GM10248 (cell line): ENCODE measurements at regions of chr4 and their contacts with region 1.

Region 1: GRCh38 chr4:94610145-94610544 is 147.6 kb upstream of the BMPR1B start:
- DNase-seq: no peak
- CTCF ChIP-seq: no peak

Region 2: DNA sequence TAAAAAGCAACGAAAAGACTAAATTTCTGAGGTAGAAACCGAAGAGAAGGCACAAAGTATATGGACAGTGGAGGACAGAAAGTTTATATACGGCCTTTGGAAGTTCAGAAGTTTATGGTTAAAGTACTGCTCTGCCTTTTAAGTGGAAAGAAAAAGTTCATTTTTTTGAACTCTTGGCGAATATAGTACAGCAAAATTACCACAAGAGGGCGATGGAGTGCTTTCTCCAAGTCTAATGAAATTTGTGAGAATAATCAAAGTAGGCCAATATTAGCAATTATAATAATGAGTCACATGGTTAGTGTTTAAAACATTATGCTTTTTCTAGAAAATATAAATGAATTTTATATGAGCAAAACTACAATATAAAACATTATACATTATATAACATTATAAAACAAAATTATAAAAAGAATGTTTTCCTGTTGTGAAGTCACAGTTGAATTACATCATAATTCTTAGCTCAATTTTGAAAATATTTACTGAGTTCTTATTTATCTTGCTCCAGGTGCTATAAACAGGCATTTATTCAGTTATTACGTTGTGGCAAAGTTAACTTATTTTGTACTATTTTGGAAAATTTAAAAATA is 11.4 kb after region 1 on chr4:
- CTCF ChIA-PET with region 1: interaction called, 23 read pairs
- POLR2A ChIA-PET with region 1: no interaction called
- DNase-seq: peak; percentile 55
- CTCF ChIP-seq: peak; percentile 76